CD8-positive, alpha-beta memory T cell (primary cell): ENCODE measurements at regions of chr17 and their contacts with region 1.

Region 1: DNA sequence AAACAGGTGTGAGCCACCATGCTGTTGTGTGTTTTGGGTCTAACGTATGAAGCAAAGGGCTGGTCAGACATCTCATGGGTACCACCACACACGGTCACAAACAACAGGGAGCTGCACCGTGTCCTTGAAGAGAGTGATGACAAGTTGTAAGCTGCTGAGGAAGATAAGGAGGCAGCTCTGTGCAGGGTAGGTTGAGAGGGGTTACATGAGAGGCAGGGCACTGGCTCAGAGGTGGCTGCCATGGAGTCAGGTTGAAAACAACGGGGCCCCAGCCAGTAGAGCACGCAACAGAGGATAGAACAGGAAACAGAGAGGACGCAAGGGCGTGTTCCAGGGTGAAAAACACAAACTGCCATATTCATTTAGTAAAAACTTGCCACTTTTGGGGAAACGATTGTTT is 52.2 kb downstream of the TRARG1 start:
- DNase-seq: no peak
- H3K4me3 ChIP-seq: no peak overlapping the region
- H3K4me3 Mint-ChIP-seq: peak overlapping the region in 1 of 7 donors; percentile 49
- H3K27ac ChIP-seq: no peak overlapping the region
- H3K27ac Mint-ChIP-seq: no peak overlapping the region
- H3K4me1 ChIP-seq: peaks cover 15% of the 10 kb centered on the region
- H3K4me1 Mint-ChIP-seq: peaks cover 7 to 13% (median 10%) of the 10 kb centered on the region in 3 donors
- H3K27me3 ChIP-seq: no peaks in the 10 kb centered on the region
- H3K27me3 Mint-ChIP-seq: peaks cover 2 to 5% of the 10 kb centered on the region in 2 donors

Region 2: DNA sequence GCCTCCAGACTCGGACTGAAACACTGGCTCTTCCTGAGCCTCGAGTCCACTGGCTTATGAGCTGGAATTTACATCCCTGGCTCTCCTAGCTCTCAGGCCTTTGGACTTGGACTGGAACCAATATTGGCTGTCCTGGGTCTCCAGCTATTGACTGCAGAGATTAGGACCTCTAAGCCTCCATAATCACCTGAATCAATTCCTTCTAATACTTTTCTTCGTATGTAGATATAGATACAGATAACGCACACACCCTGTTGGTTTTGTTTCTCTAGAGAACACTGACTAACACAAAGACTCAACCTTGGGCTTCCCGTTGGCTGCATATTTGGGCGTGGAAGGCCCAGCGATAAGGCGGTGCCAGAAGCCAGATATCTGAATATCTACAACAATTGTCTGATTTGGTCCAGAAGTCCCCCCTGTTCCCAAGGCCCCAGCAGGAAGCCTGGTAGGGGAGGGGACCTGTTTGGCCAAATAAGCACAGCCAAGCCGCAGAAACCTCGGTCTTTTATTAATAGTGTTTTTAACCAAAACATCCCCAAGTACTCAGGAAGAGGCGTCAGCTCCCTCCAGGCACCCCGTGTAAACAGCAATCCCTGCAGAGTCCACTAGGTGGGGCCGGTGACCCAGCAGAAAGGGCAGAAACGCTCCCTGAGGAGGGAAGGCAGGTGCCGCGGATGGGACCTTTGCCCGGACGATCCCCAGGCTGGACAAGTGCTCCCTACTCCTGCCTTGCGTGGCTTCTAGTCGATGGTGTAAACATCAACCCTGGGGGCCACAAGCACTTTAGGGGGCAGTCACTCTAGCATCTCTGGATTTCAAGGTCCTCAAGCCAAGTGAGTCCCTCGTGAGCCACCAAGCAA is 208.9 kb before region 1 on chr17:
- CTCF ChIA-PET with region 1: interaction called, 16 read pairs
- POLR2A ChIA-PET with region 1: no interaction called
- DNase-seq: peak; percentile 63 to 86 (median 69)
- H3K4me3 ChIP-seq: no peak overlapping the region
- H3K4me3 Mint-ChIP-seq: peak overlapping the region in 2 of 7 donors; percentile 27 to 51
- H3K27ac ChIP-seq: no peak overlapping the region
- H3K27ac Mint-ChIP-seq: peak overlapping the region in 3 of 8 donors; percentile 27 to 44 (median 38)
- H3K4me1 ChIP-seq: peaks cover 12% of the 10 kb centered on the region
- H3K4me1 Mint-ChIP-seq: peaks cover 9 to 34% (median 17%) of the 10 kb centered on the region in 3 donors
- H3K27me3 ChIP-seq: no peaks in the 10 kb centered on the region
- H3K27me3 Mint-ChIP-seq: peaks cover 0 to 1% of the 10 kb centered on the region in 2 donors

Region 3: DNA sequence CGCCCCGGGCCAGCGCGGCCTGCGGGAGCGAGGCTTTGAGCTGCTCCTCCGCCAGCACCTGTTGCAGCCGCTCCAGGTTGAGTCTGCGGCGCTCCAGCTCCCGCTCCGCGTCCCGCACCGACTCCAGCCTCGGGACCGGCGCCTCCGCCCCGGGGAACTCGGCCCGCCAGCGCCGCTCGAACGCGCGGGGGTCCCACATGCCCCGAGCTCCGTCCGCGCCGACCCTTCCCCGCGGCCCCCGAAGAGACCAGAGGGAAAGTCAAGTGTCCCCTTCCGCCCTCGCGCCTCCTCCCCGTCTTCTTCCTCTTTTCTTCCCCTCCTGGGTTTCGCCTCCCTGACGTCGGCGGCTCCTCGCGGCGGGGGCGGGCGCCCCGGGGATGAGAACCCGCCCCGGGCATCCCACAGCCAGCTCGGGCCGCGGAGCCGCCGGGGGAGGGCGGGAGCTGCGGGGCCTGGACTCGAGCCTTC is 102.2 kb before region 1 on chr17:
- CTCF ChIA-PET with region 1: no interaction called
- POLR2A ChIA-PET with region 1: no interaction called
- DNase-seq: peak; percentile 18 to 49 (median 34)
- H3K4me3 ChIP-seq: no peak overlapping the region
- H3K4me3 Mint-ChIP-seq: peak overlapping the region; percentile 21 to 93 (median 73)
- H3K27ac ChIP-seq: no peak overlapping the region
- H3K27ac Mint-ChIP-seq: peak overlapping the region in 1 of 8 donors; percentile 38
- H3K4me1 ChIP-seq: peaks cover 5% of the 10 kb centered on the region
- H3K4me1 Mint-ChIP-seq: peaks cover 16 to 30% (median 21%) of the 10 kb centered on the region in 3 donors
- H3K27me3 ChIP-seq: peaks cover 5% of the 10 kb centered on the region
- H3K27me3 Mint-ChIP-seq: peaks cover 24 to 35% of the 10 kb centered on the region in 2 donors

Region 4: DNA sequence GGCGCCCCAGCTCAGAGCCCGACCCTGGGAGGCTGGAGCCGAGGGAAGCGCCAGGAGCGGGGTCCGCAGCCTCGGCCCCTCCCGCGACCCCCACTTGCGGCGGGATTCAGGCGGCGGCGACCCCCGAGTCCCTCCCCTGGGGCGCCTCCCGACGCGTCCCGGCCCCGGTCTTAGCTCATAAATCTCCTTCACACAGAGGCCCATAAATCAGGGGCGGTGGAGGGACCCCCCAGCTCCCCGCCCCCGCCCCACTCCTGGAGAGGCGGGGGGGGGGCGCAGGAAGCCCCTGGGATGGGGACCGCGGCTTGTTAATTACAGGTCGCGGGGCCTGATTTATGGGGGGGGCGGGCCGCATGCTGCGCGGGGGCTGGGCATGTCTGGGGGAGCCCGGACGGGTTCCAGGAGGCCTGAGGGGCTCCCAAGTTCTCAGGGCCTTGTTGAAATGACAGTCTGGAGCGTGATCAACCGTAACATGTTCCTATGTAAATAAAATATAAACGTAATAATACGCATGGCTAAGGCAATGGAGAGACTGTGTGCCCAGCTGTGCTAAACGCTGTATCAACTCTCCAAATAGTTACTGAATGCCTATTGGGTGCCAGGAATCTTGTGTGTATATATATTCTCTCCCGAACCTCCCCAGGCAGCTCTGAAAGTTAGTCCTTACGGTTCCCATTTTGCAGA is 71.5 kb before region 1 on chr17:
- CTCF ChIA-PET with region 1: interaction called, 45 read pairs
- POLR2A ChIA-PET with region 1: interaction called, 8 read pairs
- DNase-seq: no peak
- H3K4me3 ChIP-seq: no peak overlapping the region
- H3K4me3 Mint-ChIP-seq: peak overlapping the region; percentile 7 to 68 (median 46)
- H3K27ac ChIP-seq: no peak overlapping the region
- H3K27ac Mint-ChIP-seq: peak overlapping the region in 3 of 8 donors; percentile 12 to 66 (median 52)
- H3K4me1 ChIP-seq: peaks cover 21% of the 10 kb centered on the region
- H3K4me1 Mint-ChIP-seq: peaks cover 32 to 44% (median 42%) of the 10 kb centered on the region in 3 donors
- H3K27me3 ChIP-seq: no peaks in the 10 kb centered on the region
- H3K27me3 Mint-ChIP-seq: peaks cover 0 to 3% of the 10 kb centered on the region in 2 donors

Region 5: GRCh38 chr17:1275962-1276736 is 55.6 kb before region 1 on chr17:
- CTCF ChIA-PET with region 1: interaction called, 42 read pairs
- POLR2A ChIA-PET with region 1: no interaction called
- DNase-seq: peak; percentile 56 to 80 (median 69)
- H3K4me3 ChIP-seq: no peak overlapping the region
- H3K4me3 Mint-ChIP-seq: peak overlapping the region in 6 of 7 donors; percentile 6 to 70 (median 36)
- H3K27ac ChIP-seq: no peak overlapping the region
- H3K27ac Mint-ChIP-seq: peak overlapping the region in 3 of 8 donors; percentile 27 to 52 (median 47)
- H3K4me1 ChIP-seq: peaks cover 4% of the 10 kb centered on the region
- H3K4me1 Mint-ChIP-seq: peaks cover 5 to 10% (median 7%) of the 10 kb centered on the region in 3 donors
- H3K27me3 ChIP-seq: peaks cover 9% of the 10 kb centered on the region
- H3K27me3 Mint-ChIP-seq: peaks cover 17 to 20% of the 10 kb centered on the region in 2 donors

Region 6: GRCh38 chr17:1294157-1294717 is 37.5 kb before region 1 on chr17:
- CTCF ChIA-PET with region 1: interaction called, 10 read pairs
- POLR2A ChIA-PET with region 1: no interaction called
- DNase-seq: peak; percentile 74 to 96 (median 95)
- H3K4me3 ChIP-seq: no peak overlapping the region
- H3K4me3 Mint-ChIP-seq: peak overlapping the region; percentile 27 to 85 (median 71)
- H3K27ac ChIP-seq: peak overlapping the region; percentile 39
- H3K27ac Mint-ChIP-seq: peak overlapping the region; percentile 78 to 98 (median 92)
- H3K4me1 ChIP-seq: peaks cover 56% of the 10 kb centered on the region
- H3K4me1 Mint-ChIP-seq: peaks cover 57 to 71% (median 67%) of the 10 kb centered on the region in 3 donors
- H3K27me3 ChIP-seq: no peaks in the 10 kb centered on the region
- H3K27me3 Mint-ChIP-seq: peaks cover 0 to 14% of the 10 kb centered on the region in 2 donors

Region 7: DNA sequence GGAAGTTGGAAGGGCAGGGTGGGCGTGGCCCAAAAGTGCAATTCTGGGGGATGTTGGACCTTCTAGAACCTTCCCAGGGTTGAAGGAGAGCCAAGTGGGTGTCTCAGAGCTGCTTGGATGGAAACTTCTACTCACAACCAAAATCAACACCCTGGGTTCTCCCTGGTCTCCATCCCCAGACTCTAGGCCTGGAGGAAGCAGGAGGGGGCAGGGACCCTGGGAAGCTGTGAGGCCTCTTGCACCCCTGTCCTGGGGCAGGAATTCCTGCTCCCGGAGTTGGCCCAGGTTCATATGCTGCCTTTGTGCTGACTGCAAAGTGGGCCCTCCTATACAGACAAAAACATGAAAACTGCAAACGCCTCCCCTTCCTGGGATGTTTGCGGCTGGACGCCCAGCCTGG is 27.2 kb before region 1 on chr17:
- CTCF ChIA-PET with region 1: no interaction called
- POLR2A ChIA-PET with region 1: no interaction called
- DNase-seq: no peak
- H3K4me3 ChIP-seq: no peak overlapping the region
- H3K4me3 Mint-ChIP-seq: no peak overlapping the region
- H3K27ac ChIP-seq: no peak overlapping the region
- H3K27ac Mint-ChIP-seq: no peak overlapping the region
- H3K4me1 ChIP-seq: no peaks in the 10 kb centered on the region
- H3K4me1 Mint-ChIP-seq: no peaks in the 10 kb centered on the region
- H3K27me3 ChIP-seq: no peaks in the 10 kb centered on the region
- H3K27me3 Mint-ChIP-seq: peaks cover 1 to 13% of the 10 kb centered on the region in 2 donors